Gastrocnemius medialis (tissue), 4 donors: ENCODE measurements at regions of chr10 and their contacts with region 1.

Region 1: DNA sequence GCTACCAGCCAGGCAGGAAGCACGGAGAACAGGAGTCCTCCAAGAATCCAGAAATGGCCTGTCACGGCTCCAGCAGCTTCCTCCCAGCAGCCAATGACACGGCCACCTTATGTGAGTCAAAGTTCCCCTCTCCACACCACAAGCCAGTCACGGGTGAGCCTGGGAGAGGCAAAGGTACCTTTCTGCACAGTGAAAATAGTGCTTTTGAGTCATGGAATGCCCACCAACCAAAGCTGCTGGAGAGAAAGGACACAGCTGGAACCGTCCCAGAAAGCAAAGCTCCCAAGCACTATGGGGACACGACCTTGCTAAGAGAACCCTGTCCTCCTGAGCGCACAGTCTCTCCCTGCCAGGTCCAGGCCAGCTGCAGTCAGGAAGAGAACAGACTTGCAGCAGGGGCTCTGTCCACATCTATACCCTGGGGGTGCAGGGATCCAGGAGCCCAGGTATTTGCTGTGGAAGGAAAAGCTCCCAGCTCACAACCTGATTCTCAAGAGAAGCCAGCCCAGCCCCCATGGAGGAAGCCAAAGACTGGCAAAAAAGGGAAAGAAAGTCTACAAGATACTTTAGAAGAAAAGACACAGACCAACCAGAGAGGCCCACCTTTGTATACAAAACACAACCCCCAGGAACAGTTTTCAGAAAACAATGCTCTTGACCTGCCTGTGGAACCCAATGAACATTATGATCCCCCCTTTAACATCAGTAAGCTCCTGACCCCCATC is 24.4 kb downstream of the C10orf71 start:
- DNase-seq: peak in 1 of 2 donors; percentile 71
- ATAC-seq: peak; percentile 62 to 75
- H3K4me3 ChIP-seq: no peak overlapping the region
- H3K27ac ChIP-seq: peak overlapping the region; percentile 66 to 95 (median 82)
- H3K4me1 ChIP-seq: peaks cover 11 to 14% of the 10 kb centered on the region in 2 donors
- H3K27me3 ChIP-seq: no peaks in the 10 kb centered on the region
- CTCF ChIP-seq: no peak
- POLR2A ChIP-seq: no peak

Region 2: GRCh38 chr10:49218480-49218879 is 104.9 kb before region 1 on chr10:
- in situ Hi-C with region 1: no loop called
- intact Hi-C with region 1: loop called (anchors 2 kb)
- DNase-seq: no peak
- ATAC-seq: peak; percentile 44 to 58
- H3K4me3 ChIP-seq: no peak overlapping the region
- H3K27ac ChIP-seq: no peak overlapping the region
- H3K4me1 ChIP-seq: no peaks in the 10 kb centered on the region
- H3K27me3 ChIP-seq: no peaks in the 10 kb centered on the region
- CTCF ChIP-seq: peak in 1 of 5 experiments; percentile 11
- POLR2A ChIP-seq: no peak